ENCODE measurements at regions of chr16 and their contacts with region 1.

Region 1: DNA sequence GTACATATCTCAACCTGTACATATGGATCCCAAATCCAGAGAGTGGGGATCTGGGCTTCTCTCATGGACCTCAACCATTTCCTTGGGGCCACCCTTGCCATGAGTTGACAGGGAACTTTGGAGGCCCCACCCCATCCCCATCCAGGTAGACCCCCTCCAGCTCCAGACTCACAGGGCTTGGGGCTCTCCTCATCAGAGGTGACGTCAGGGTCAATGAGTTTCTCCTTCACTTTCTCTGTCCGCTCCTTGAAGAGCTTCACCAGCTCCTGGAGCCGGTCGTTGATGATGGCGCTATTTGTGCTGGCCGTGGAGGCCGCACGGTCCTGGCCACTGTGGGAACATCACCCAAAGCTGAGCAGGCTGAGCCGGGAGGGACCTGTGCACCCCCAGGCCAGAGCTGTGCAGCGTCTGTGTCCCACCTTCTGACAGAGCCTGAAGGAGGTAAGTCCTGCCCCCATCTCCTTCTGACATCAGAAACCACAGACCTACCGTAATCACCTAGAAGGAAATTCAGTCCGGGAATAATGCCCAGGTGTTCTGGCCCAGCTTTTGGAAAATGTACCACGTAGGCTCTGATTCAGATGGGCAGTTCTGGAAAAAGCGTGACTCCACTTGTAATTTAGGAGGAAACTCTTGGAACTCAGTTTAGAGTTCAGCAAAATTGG is 50.6 kb downstream of the CNGB1 start:
- DNase-seq: no peak
- H3K4me3 ChIP-seq: no peak overlapping the region
- H3K27ac ChIP-seq: no peak overlapping the region
- H3K4me1 ChIP-seq: no peaks in the 10 kb centered on the region
- H3K27me3 ChIP-seq: peaks cover 3 to 4% of the 10 kb centered on the region in 2 experiments
- CTCF ChIP-seq: no peak
- POLR2A ChIP-seq: no peak

Region 2: DNA sequence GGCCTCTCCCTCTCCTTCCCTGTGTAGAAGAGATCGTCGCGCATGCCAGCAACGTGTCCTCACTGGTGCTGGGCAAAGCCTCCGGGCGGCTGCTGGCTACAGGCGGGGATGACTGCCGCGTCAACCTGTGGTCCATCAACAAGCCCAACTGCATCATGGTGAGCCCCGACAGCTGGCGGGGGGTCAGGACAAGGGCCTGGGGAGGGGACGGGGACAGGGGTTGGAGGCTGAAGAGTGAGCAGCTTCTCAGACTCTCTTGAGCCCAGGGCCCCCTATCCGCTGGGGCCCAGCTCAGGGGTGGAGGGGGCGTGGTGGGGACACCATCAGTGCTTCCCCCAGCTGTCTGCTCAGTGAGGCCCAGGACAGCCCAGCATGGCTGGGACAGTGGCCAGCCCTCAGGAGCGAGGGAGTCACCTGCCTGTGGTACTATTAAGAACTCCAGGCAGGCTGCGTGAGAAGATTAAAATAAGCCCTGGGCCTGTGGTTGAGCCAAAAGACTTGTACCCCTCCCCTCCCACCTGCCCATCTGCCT is 178.6 kb before region 1 on chr16:
- CTCF ChIA-PET with region 1: no interaction called
- POLR2A ChIA-PET with region 1: no interaction called
- dilution Hi-C with region 1: no loop called
- intact Hi-C with region 1: no loop called
- DNase-seq: no peak
- H3K4me3 ChIP-seq: no peak overlapping the region
- H3K27ac ChIP-seq: no peak overlapping the region
- H3K4me1 ChIP-seq: peaks cover 5% of the 10 kb centered on the region
- H3K27me3 ChIP-seq: no peaks in the 10 kb centered on the region
- CTCF ChIP-seq: no peak
- POLR2A ChIP-seq: no peak

Region 3: GRCh38 chr16:57930533-57930932 is 10.2 kb after region 1 on chr16:
- CTCF ChIA-PET with region 1: interaction called, 17 read pairs
- POLR2A ChIA-PET with region 1: no interaction called
- dilution Hi-C with region 1: no loop called
- intact Hi-C with region 1: no loop called
- DNase-seq: no peak
- H3K4me3 ChIP-seq: no peak overlapping the region
- H3K27ac ChIP-seq: no peak overlapping the region
- H3K4me1 ChIP-seq: no peaks in the 10 kb centered on the region
- H3K27me3 ChIP-seq: peaks cover 2 to 3% of the 10 kb centered on the region in 2 experiments
- CTCF ChIP-seq: no peak
- POLR2A ChIP-seq: no peak